ENCODE measurements at regions of chr13 and their contacts with region 1.

Region 1: GRCh38 chr13:49495783-49496762 is at the start of gene PHF11:
- DNase-seq: peak; percentile 85
- H3K4me3 Mint-ChIP-seq: peak within 1 kb of the TSS; percentile 96
- H3K27ac Mint-ChIP-seq: peak within 1 kb of the TSS; percentile 99
- H3K4me1 Mint-ChIP-seq: peaks cover 57% of the 10 kb centered on the region
- H3K27me3 Mint-ChIP-seq: no peaks in the 10 kb centered on the region
- total RNA-seq, gene PHF11: 66.0 and 68.0 TPM in 2 replicates

Region 2: GRCh38 chr13:48975856-48976575 is 520.1 kb before region 1 on chr13 and contains the start of gene FNDC3A:
- intact Hi-C with region 1: loop called (anchors 2 kb)
- DNase-seq: peak; percentile 86
- H3K4me3 Mint-ChIP-seq: peak within 1 kb of the TSS; percentile 94
- H3K27ac Mint-ChIP-seq: peak within 1 kb of the TSS; percentile 100
- H3K4me1 Mint-ChIP-seq: peaks cover 43% of the 10 kb centered on the region
- H3K27me3 Mint-ChIP-seq: peaks cover 2% of the 10 kb centered on the region
- total RNA-seq, gene FNDC3A: 26.9 and 27.0 TPM in 2 replicates

Region 3: GRCh38 chr13:49220036-49220855 is 275.8 kb before region 1 on chr13 and contains the start of gene MLNR:
- intact Hi-C with region 1: no loop called
- DNase-seq: peak; percentile 11
- H3K4me3 Mint-ChIP-seq: peak within 1 kb of the TSS; percentile 56
- H3K27ac Mint-ChIP-seq: no peak within 1 kb of the TSS
- H3K4me1 Mint-ChIP-seq: peaks cover 16% of the 10 kb centered on the region
- H3K27me3 Mint-ChIP-seq: peaks cover 64% of the 10 kb centered on the region
- total RNA-seq, gene MLNR: not detected in 2 replicates

Region 4: DNA sequence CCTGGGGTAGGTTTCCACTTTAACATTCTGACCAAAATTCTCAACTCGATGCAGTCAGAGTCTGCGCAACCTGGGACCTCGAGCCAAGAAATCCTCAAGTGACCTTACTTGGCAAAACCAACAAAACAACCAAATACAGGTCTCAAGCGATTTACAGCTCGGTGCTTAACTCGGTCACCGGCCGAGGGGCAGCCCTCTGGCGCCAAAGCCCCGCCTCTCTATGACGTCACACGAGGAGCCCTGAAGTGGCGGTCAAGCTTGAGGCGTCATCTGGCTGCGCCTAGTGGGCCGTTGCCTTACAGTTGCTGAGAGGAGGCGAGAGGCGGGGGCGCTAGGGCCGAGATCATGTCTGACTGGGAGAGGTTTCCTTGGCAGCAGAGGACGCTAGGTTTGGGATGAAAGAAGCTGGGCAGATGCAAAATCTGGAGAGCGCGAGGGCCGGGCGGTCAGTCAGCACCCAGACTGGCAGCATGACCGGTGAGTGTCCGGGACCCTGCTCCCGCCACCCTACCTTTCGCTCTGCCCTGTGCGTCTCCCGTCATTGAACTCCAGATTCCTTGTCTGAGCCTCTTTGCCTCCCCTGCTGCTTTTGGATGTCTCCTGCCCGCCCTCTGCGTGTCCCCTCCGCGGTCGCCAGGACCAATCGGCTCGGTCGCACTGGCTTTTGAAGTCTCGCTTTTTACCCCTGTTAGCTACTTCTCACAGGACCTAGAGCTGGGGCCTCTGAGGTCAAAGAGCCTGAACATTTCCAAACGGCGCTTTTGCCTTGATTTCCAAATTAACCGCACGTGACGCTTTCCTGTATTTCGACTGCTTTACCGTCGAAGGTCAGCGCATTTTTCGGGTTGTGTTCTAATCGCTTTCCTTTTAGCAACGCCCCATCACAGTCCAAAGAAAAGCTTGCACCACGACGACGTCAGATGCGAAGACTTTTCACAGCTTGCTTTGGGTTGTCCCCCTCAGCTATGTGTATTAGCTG is 248.1 kb before region 1 on chr13 and contains the start of gene CDADC1:
- intact Hi-C with region 1: loop called (anchors 1 kb)
- DNase-seq: peak; percentile 90
- H3K4me3 Mint-ChIP-seq: peak within 1 kb of the TSS; percentile 97
- H3K27ac Mint-ChIP-seq: peak within 1 kb of the TSS; percentile 97
- H3K4me1 Mint-ChIP-seq: peaks cover 40% of the 10 kb centered on the region
- H3K27me3 Mint-ChIP-seq: peaks cover 14% of the 10 kb centered on the region
- total RNA-seq, gene CDADC1: 8.1 and 9.5 TPM in 2 replicates

Region 5: GRCh38 chr13:49454388-49455006 is 41.6 kb before region 1 on chr13:
- intact Hi-C with region 1: loop called (anchors 1 kb)
- DNase-seq: no peak
- H3K4me3 Mint-ChIP-seq: no peak overlapping the region
- H3K27ac Mint-ChIP-seq: peak overlapping the region; percentile 77
- H3K4me1 Mint-ChIP-seq: peaks cover 35% of the 10 kb centered on the region
- H3K27me3 Mint-ChIP-seq: no peaks in the 10 kb centered on the region

Region 6: GRCh38 chr13:49606747-49607648 is 110.9 kb after region 1 on chr13:
- intact Hi-C with region 1: loop called (anchors 2 kb)
- DNase-seq: peak; percentile 69
- H3K4me3 Mint-ChIP-seq: peak overlapping the region; percentile 80
- H3K27ac Mint-ChIP-seq: peak overlapping the region; percentile 76
- H3K4me1 Mint-ChIP-seq: peaks cover 13% of the 10 kb centered on the region
- H3K27me3 Mint-ChIP-seq: no peaks in the 10 kb centered on the region

Region 7: GRCh38 chr13:49792550-49793324 is 296.7 kb after region 1 on chr13 and contains the start of gene KPNA3:
- intact Hi-C with region 1: loop called (anchors 1 kb)
- DNase-seq: peak; percentile 93
- H3K4me3 Mint-ChIP-seq: peak within 1 kb of the TSS; percentile 96
- H3K27ac Mint-ChIP-seq: peak within 1 kb of the TSS; percentile 97
- H3K4me1 Mint-ChIP-seq: peaks cover 30% of the 10 kb centered on the region
- H3K27me3 Mint-ChIP-seq: peaks cover 6% of the 10 kb centered on the region
- total RNA-seq, gene KPNA3: 54.7 and 55.0 TPM in 2 replicates

Region 8: DNA sequence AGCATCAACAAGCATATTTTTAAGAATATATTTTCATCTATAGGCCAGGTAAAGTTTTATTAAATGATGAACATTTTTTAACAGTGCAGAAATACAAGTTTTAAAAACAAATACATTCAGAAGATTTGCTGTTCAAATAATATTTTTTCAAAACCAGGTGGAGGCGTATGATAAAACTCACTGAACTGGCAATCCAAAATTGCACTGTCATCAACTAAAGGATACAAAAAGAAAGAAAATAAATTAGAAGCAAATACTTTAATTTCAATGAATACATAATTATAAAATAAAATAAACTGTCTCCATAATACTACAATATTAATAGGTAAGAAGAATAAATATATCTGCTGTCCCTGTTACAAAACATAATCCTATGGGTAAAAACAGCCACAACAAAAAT is 418.9 kb after region 1 on chr13:
- intact Hi-C with region 1: no loop called
- DNase-seq: no peak
- H3K4me3 Mint-ChIP-seq: no peak overlapping the region
- H3K27ac Mint-ChIP-seq: no peak overlapping the region
- H3K4me1 Mint-ChIP-seq: no peaks in the 10 kb centered on the region
- H3K27me3 Mint-ChIP-seq: no peaks in the 10 kb centered on the region

Region 9: DNA sequence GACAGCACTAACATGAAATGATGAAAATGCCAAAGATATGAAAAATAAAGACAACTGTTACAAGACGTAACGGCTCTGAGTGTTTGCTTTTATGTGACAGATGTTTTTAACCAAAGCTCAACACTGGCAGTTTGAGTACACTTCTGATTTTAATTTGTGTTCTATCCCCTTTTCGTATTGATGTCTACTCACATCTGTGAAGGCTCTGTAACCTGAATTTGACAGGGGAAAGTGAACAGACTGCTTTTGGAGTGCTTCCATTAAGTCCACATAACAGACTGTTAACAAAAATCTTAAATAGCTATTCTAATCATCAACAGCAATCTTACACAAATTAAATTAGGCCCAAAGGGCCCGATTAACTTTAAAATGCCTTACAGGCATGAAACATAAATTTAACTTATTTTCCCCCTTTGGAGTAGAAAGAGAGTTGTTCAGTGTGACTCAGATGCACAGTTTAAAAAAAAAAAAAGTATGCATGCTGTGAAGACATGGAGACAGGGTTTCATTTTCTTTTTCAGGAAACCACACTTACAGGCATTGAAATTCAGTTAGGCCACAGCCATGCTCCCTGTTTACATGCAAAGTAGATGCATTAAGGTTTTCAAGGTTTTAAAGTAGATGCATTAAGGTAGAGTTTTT is 1397.3 kb after region 1 on chr13:
- intact Hi-C with region 1: loop called (anchors 5 kb)
- DNase-seq: peak; percentile 40
- H3K4me3 Mint-ChIP-seq: peak overlapping the region; percentile 77
- H3K27ac Mint-ChIP-seq: peak overlapping the region; percentile 87
- H3K4me1 Mint-ChIP-seq: peaks cover 49% of the 10 kb centered on the region
- H3K27me3 Mint-ChIP-seq: no peaks in the 10 kb centered on the region